HepG2 (cell line): ENCODE measurements at regions of chr1 and their contacts with region 1.

Region 1: DNA sequence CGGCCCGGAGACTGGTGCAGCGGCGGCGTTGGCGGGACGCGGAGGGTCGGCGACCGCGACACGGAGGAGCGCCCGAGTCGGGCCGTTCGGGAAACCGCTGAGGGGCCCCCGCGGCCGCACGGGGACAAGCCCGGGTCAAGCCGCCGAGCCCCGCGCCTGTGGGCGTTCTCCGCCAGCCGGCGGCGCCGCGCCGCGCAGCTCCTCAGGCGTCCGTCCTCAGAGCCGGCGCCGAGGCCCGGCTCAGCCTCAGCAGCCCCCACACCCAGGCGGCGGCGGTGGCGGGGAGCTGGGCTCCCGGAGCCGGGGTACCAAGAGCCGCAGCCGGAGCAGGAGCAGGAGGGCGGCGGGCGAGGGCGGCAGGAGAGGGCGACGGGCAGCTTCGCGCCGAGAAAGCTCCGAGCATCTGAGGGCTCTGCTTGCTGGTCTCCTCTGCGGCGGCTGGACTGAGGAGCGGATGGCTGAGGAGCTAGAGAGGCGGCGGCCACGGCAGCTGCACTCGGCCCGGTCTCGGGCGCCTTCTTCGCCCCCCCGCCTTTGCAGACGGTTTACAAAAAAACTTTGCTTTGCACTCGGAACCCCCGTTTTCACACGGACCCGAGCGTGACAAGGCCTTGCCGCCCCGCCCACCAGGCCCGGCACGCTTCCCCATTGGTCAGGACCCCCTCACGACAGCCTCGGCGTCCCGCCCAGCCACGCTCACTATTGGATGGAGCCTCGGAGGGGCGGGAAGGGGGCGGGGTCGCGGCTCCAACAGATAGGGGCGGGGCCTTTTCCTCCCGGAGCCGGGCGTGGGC is at the start of gene SLC30A1:
- DNase-seq: peak; percentile 93
- ATAC-seq: peak; percentile 83
- H3K4me3 ChIP-seq: peak within 1 kb of the TSS; percentile 84 to 96 (median 87)
- H3K27ac ChIP-seq: peak within 1 kb of the TSS; percentile 84
- H3K4me1 ChIP-seq: peaks cover 62% of the 10 kb centered on the region
- H3K27me3 ChIP-seq: peaks cover 0 to 2% of the 10 kb centered on the region in 2 experiments; a peak in 3 of 5 replicates
- CTCF ChIP-seq: no peak
- EP300 ChIP-seq: no peak
- POLR2A ChIP-seq: peak; percentile 74 to 83
- RAD21 ChIP-seq: no peak; the same call in none of the 2 replicates
- total RNA-seq, gene SLC30A1: 24.4 and 26.8 TPM in 2 replicates

Region 2: DNA sequence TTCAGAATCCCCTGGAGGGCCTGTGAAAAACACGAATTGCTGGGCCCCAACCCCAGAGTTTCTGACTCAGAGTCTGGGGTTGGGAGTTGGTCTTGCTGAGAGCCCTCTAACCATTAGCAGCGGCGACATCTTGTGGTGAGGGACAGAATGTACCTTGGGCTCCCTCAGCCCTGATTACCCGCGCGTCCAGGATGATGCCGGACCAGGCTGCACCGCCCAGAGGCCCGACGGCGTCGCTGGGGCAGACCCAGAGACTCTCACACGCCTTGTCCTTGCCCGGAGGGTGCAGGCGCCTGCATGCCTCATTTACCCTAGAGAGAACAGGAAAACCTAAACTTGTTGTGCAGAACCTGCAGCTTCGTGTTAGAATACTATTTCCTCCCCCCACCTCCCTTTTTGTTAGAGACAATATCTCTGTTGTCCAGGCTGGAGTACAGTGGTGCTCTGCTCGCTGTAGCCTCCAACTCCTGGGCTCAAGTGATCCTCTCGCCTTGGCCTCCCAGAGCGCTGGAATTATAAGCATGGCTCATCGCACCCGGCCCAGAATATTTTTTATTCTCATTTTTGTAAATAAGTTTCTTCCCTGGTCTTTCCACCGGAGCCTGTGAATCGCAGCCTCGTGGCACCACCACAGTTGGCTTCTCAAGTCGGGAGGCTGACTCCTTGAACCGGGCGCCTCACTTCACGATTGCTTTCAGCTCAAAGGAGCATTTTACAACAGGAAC is 64.6 kb before region 1 on chr1:
- CTCF ChIA-PET with region 1: no interaction called
- POLR2A ChIA-PET with region 1: interaction called, 12 read pairs
- in situ Hi-C with region 1: loop called (anchors 5 kb)
- intact Hi-C with region 1: loop called (anchors 2 kb)
- DNase-seq: peak; percentile 82
- ATAC-seq: peak; percentile 82
- H3K4me3 ChIP-seq: peak overlapping the region in 1 of 3 experiments; percentile 60; a peak in 2 of 6 replicates
- H3K27ac ChIP-seq: no peak overlapping the region
- H3K4me1 ChIP-seq: peaks cover 49% of the 10 kb centered on the region
- H3K27me3 ChIP-seq: peaks cover 0 to 12% of the 10 kb centered on the region in 2 experiments; a peak in 2 of 5 replicates
- CTCF ChIP-seq: peak; percentile 95
- EP300 ChIP-seq: no peak
- POLR2A ChIP-seq: no peak
- RAD21 ChIP-seq: peak; percentile 81

Region 3: GRCh38 chr1:211606914-211607755 is 28.3 kb after region 1 on chr1:
- CTCF ChIA-PET with region 1: interaction called, 4 read pairs
- POLR2A ChIA-PET with region 1: interaction called, 79 read pairs
- in situ Hi-C with region 1: no loop called
- intact Hi-C with region 1: loop called (anchors 1 kb)
- DNase-seq: no peak
- ATAC-seq: no peak
- H3K4me3 ChIP-seq: peak overlapping the region; percentile 42 to 65 (median 48)
- H3K27ac ChIP-seq: no peak overlapping the region
- H3K4me1 ChIP-seq: peaks cover 93% of the 10 kb centered on the region
- H3K27me3 ChIP-seq: no peaks in the 10 kb centered on the region
- CTCF ChIP-seq: no peak
- EP300 ChIP-seq: no peak
- POLR2A ChIP-seq: no peak
- RAD21 ChIP-seq: no peak

Region 4: GRCh38 chr1:211619033-211619996 is 40.5 kb after region 1 on chr1:
- CTCF ChIA-PET with region 1: interaction called, 30 read pairs
- POLR2A ChIA-PET with region 1: interaction called, 14 read pairs
- in situ Hi-C with region 1: loop called (anchors 5 kb)
- intact Hi-C with region 1: no loop called
- DNase-seq: peak; percentile 75
- ATAC-seq: peak; percentile 78
- H3K4me3 ChIP-seq: peak overlapping the region in 1 of 3 experiments; percentile 51; a peak in 2 of 6 replicates
- H3K27ac ChIP-seq: peak overlapping the region; percentile 50
- H3K4me1 ChIP-seq: peaks cover 72% of the 10 kb centered on the region
- H3K27me3 ChIP-seq: peaks cover 0 to 2% of the 10 kb centered on the region in 2 experiments; a peak in 1 of 5 replicates
- CTCF ChIP-seq: 0 out of 2 replicates have a peak, but pooled peaks have one; percentile 6
- EP300 ChIP-seq: peak; percentile 65; a peak in 2 of 4 replicates
- POLR2A ChIP-seq: no peak
- RAD21 ChIP-seq: no peak

Region 5: GRCh38 chr1:211643324-211644212 is 64.7 kb after region 1 on chr1:
- CTCF ChIA-PET with region 1: interaction called, 20 read pairs
- POLR2A ChIA-PET with region 1: interaction called, 28 read pairs
- in situ Hi-C with region 1: no loop called
- intact Hi-C with region 1: loop called (anchors 2 kb)
- DNase-seq: peak; percentile 96
- ATAC-seq: peak; percentile 75
- H3K4me3 ChIP-seq: peak overlapping the region; percentile 5 to 64 (median 53); a peak in 5 of 6 replicates
- H3K27ac ChIP-seq: peak overlapping the region; percentile 26
- H3K4me1 ChIP-seq: peaks cover 85% of the 10 kb centered on the region
- H3K27me3 ChIP-seq: no peaks in the 10 kb centered on the region
- CTCF ChIP-seq: 0 out of 2 replicates have a peak, but pooled peaks have one; percentile 18
- EP300 ChIP-seq: peak in 1 of 2 experiments; percentile 93; a peak in 2 of 4 replicates
- POLR2A ChIP-seq: no peak
- RAD21 ChIP-seq: 0 out of 2 replicates have a peak, but pooled peaks have one; percentile 12

Region 6: DNA sequence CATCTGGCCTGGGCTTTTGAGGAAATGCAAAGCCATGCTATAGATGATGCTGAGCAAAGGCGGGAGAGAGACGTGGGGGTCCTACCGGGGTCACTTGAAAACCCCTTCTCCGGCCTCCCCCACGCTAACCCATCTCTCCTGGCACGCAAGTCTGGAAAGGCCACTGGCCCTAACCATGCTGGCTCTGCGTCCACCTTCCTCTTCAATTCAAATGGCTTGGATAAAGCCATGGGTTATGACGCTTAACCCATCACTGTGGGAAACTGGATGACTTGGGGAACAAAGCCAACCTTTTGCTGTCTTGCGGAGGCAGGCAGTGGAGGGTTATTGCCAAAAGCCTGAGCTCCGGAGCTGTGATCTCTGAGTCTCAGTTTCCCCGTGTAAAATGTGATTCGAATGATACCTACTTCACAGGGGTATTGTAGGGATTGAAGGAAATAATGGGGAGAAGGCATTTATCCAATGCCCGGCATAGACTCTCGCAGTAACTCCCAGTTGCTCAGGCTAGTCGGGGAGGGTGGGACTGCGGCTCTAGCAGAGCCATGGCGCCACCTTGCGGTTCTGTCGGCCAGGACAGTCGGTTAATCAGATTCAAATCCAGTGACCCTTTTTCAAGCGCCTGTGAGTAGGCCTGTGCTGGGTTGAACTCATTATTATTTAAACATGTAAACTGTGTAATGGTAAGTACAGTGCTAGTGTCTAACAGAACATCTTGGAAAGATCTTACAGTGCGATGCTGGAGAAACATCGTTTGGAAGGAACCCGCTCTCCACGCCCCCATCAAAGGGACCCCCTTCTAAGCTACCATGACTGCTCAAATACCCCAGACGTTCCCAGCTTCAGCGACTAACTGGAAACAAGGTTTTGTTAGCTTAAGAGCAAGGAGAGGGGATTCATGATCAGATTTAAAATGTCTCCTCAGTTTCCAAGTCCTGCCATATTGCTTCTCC is 76.3 kb after region 1 on chr1:
- CTCF ChIA-PET with region 1: interaction called, 25 read pairs
- POLR2A ChIA-PET with region 1: interaction called, 11 read pairs
- in situ Hi-C with region 1: loop called (anchors 5 kb)
- intact Hi-C with region 1: loop called (anchors 1 kb)
- DNase-seq: peak; percentile 69
- ATAC-seq: peak; percentile 95
- H3K4me3 ChIP-seq: no peak overlapping the region
- H3K27ac ChIP-seq: no peak overlapping the region
- H3K4me1 ChIP-seq: peaks cover 41% of the 10 kb centered on the region
- H3K27me3 ChIP-seq: no peaks in the 10 kb centered on the region; a peak in 1 of 5 replicates
- CTCF ChIP-seq: peak; percentile 94
- EP300 ChIP-seq: no peak
- POLR2A ChIP-seq: no peak
- RAD21 ChIP-seq: peak; percentile 92